Calu3 (cell line): ENCODE measurements at regions of chr1 and their contacts with region 1.

Region 1: GRCh38 chr1:147567594-147568381 is 26.5 kb downstream of the BCL9 start:
- DNase-seq: peak; percentile 55
- H3K4me3 Mint-ChIP-seq: no peak overlapping the region
- H3K27ac Mint-ChIP-seq: no peak overlapping the region
- H3K4me1 Mint-ChIP-seq: peaks cover 11% of the 10 kb centered on the region
- H3K27me3 Mint-ChIP-seq: no peaks in the 10 kb centered on the region
- CTCF ChIP-seq: no peak

Region 2: DNA sequence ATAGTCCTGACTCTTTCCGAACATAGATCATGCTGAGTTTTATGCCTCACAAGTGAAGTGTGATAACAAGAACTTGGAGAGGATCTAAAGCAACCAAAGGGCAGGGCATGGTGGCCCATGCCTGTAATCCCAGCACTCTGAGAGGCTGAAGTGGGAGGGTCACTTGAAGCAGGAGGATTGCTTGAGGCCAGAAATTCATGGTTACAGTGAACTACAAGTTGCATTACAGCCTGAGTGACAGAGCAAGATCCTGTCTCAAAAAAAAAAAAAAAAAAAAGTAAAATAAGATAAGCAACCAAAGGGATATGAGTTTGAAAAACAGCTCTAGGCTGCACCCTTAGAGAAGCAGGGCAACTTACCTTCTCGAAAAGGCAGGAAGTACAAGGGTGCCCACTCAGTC is 45.0 kb before region 1 on chr1:
- CTCF ChIA-PET with region 1: no interaction called
- intact Hi-C with region 1: loop called (anchors 5 kb)
- DNase-seq: no peak
- H3K4me3 Mint-ChIP-seq: no peak overlapping the region
- H3K27ac Mint-ChIP-seq: no peak overlapping the region
- H3K4me1 Mint-ChIP-seq: no peaks in the 10 kb centered on the region
- H3K27me3 Mint-ChIP-seq: peaks cover 14% of the 10 kb centered on the region
- CTCF ChIP-seq: no peak